Stomach (tissue), 19 donors: ENCODE measurements at regions of chr2 and their contacts with region 1.

Region 1: DNA sequence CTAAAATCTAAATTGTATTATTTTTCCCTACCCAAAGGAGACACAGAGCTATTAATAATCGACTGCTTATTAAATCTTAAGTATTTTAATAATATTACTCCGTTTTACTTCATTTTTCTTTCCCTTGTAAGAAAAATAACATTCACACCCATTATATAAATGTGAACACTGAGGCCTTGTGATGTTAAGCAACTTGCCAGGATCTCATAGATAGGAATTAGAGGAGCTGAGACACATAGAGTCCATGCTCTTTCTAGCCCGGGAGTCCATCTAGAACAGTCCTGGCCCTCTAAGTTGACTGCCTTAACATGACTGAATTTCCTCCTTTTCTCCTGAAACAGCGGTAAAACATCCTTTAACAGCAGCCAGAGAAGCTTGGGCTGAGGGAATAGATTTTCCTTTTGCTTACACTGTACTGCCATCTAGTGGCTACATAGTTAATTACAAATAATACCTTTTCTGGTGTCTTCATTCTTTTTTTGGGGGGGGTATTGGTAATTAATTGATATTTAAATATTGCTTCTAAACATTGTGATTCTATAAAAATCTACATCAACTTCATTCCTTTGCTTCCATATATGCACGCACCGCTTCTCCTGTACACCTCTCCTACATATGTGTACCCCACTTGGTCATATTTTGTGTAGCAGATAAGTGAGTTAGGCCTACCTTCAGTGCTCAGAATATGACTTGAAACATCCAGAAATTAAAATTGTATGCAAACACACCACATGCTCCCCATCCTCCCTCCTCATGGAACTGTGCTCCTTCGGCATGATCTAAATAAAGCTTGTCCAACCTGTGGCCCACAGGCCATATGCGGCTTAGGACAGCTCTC is 125.8 kb upstream of the HNMT start:
- DNase-seq: peak in 1 of 2 donors; percentile 78
- H3K4me3 ChIP-seq: no peak overlapping the region
- H3K27ac ChIP-seq: no peak overlapping the region
- H3K4me1 ChIP-seq: no peaks in the 10 kb centered on the region
- H3K27me3 ChIP-seq: peaks cover 0 to 5% (median 0%) of the 10 kb centered on the region in 3 donors
- CTCF ChIP-seq: peak in 4 of 7 experiments; percentile 48 to 67 (median 57)
- EP300 ChIP-seq: no peak
- POLR2A ChIP-seq: no peak

Region 2: DNA sequence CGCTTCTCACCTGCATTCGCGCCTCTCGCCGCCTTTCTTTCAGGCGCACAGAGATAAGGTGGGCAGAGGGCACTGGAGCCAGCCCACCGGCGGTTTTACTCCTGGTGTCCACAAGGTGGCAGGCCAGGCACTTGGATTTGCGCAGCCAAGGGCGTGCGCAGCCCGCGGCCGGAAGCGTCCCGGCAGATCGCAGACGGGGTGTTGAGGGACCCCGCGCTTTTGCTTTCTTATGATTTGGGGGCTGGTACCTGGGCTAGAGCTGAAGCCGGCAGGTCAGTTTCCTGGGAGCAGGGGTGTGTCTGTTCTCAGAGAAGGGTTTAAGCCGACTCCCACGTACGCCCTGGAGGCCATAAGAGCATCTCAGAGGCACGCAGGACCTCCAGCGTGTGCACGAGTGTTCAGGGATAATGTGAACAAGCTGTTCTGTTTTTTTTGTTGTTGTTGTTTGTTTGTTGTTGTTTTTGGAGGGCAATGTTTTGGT is 1414.9 kb before region 1 on chr2:
- intact Hi-C with region 1: loop called (anchors 5 kb)
- DNase-seq: peak; percentile 75 to 93
- H3K4me3 ChIP-seq: peak overlapping the region; percentile 35 to 53 (median 48)
- H3K27ac ChIP-seq: no peak overlapping the region
- H3K4me1 ChIP-seq: peaks cover 5 to 11% (median 9%) of the 10 kb centered on the region in 4 donors
- H3K27me3 ChIP-seq: peaks cover 0 to 37% (median 18%) of the 10 kb centered on the region in 3 donors
- CTCF ChIP-seq: peak in 5 of 7 experiments; percentile 64 to 83 (median 76)
- EP300 ChIP-seq: no peak
- POLR2A ChIP-seq: no peak

Region 3: DNA sequence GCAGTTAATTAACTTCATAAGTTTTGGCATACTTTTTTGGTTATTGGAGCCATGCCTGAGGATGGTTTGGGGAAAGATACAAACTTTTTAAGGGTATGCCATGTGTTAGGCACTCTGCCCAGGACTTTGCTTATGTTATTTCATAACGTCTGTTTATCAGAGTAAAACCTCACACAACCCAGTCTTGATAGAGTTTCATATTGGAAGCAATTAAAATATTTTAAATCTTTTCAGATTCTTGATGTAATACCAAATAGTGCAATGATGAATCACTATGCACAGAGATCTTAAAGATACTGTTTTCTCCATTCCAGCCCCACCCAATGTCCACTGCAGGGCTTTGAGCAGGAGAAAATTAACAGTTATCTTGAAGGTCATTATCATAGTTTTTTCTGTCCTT is 403.3 kb before region 1 on chr2:
- intact Hi-C with region 1: no loop called
- DNase-seq: no peak
- H3K4me3 ChIP-seq: no peak overlapping the region
- H3K27ac ChIP-seq: no peak overlapping the region
- H3K4me1 ChIP-seq: no peaks in the 10 kb centered on the region
- H3K27me3 ChIP-seq: no peaks in the 10 kb centered on the region
- CTCF ChIP-seq: no peak
- EP300 ChIP-seq: no peak
- POLR2A ChIP-seq: no peak

Region 4: GRCh38 chr2:137467246-137467862 is 371.1 kb before region 1 on chr2:
- intact Hi-C with region 1: loop called (anchors 10 kb)
- DNase-seq: peak in 1 of 2 donors; percentile 67
- H3K4me3 ChIP-seq: no peak overlapping the region
- H3K27ac ChIP-seq: no peak overlapping the region
- H3K4me1 ChIP-seq: no peaks in the 10 kb centered on the region
- H3K27me3 ChIP-seq: no peaks in the 10 kb centered on the region
- CTCF ChIP-seq: peak in 5 of 7 experiments; percentile 11 to 36 (median 28)
- EP300 ChIP-seq: no peak
- POLR2A ChIP-seq: no peak

Region 5: DNA sequence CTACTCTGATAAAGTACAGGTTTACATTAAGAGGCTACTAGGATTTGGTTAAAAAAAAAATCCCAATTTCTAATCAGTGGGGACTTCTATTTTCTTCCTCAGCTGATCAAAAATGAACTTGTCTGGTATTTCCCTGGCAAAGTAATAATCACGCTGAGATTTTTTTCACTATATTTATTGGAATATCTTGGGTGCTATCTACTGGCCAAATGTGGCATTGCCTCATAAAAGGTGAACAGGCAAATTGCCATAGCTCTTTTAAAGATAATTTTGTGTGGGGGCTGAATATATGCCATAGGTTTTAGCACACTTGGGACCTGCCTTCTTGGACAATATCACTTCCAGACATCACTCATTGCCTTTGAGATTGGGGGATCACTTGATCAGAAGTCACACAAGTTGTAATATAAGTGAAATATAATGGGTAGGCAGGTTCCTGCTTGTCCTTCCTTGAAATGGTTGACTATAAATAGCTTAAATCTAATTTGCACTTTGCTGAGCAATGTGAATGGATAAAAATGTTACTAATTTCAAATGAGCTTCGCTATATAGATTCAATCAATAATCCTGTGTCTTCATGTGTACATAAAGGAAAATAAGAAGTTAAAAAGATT is 948.7 kb after region 1 on chr2:
- intact Hi-C with region 1: no loop called
- DNase-seq: peak in 1 of 2 donors; percentile 68
- H3K4me3 ChIP-seq: no peak overlapping the region
- H3K27ac ChIP-seq: no peak overlapping the region
- H3K4me1 ChIP-seq: peaks cover 0 to 7% (median 4%) of the 10 kb centered on the region in 4 donors
- H3K27me3 ChIP-seq: peaks cover 0 to 6% (median 0%) of the 10 kb centered on the region in 3 donors
- CTCF ChIP-seq: peak in 5 of 7 experiments; percentile 48 to 67 (median 56)
- EP300 ChIP-seq: no peak
- POLR2A ChIP-seq: no peak